Activated naive CD4-positive, alpha-beta T cell treated with anti-CD3 and anti-CD28 coated beads for 36 hours (primary cell): ENCODE measurements at regions of chr6 and their contacts with region 1.

Region 1: GRCh38 chr6:31795616-31796298 is at the start of gene VARS1:
- DNase-seq: peak; percentile 89
- H3K4me3 Mint-ChIP-seq: peak within 1 kb of the TSS; percentile 99
- H3K27ac Mint-ChIP-seq: peak within 1 kb of the TSS; percentile 96
- H3K4me1 Mint-ChIP-seq: peaks cover 43% of the 10 kb centered on the region
- H3K27me3 Mint-ChIP-seq: no peaks in the 10 kb centered on the region
- total RNA-seq, gene VARS1: 157 to 161 TPM

Region 2: GRCh38 chr6:31702819-31703522 is 92.8 kb before region 1 on chr6 and contains the start of gene ABHD16A:
- CTCF ChIA-PET with region 1: no interaction called
- intact Hi-C with region 1: loop called (anchors 1 kb)
- DNase-seq: peak; percentile 99
- H3K4me3 Mint-ChIP-seq: peak within 1 kb of the TSS; percentile 99
- H3K27ac Mint-ChIP-seq: peak within 1 kb of the TSS; percentile 97
- H3K4me1 Mint-ChIP-seq: peaks cover 22% of the 10 kb centered on the region
- H3K27me3 Mint-ChIP-seq: no peaks in the 10 kb centered on the region
- total RNA-seq, gene ABHD16A: 19.9 to 22.5 TPM

Region 3: DNA sequence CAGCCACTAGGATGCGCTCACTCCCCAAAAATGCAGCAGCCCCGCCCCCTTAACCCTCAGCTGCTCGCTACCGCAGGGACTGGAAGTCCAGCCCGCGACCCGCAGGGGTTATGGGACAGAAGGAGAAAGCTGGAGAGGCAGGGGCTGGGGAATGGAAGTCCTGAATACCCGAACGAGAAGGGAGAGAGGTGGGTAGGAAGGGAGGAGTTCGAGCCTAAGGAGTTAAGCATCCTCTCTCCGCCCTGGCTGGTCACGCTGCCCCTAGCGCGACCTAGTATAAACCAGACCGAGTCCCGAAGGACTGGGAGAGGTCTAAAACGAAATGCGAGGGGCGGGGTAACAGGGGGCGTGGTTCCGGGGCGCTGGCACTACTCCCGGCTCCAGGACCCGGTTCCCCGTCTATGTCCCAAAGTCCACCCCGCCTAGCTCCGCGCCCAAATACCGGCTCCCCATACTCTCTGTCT is 66.2 kb before region 1 on chr6:
- CTCF ChIA-PET with region 1: interaction called, 5 read pairs
- intact Hi-C with region 1: loop called (anchors 2 kb)
- DNase-seq: peak; percentile 81
- H3K4me3 Mint-ChIP-seq: peak overlapping the region; percentile 79
- H3K27ac Mint-ChIP-seq: peak overlapping the region; percentile 72
- H3K4me1 Mint-ChIP-seq: peaks cover 59% of the 10 kb centered on the region
- H3K27me3 Mint-ChIP-seq: no peaks in the 10 kb centered on the region

Region 4: DNA sequence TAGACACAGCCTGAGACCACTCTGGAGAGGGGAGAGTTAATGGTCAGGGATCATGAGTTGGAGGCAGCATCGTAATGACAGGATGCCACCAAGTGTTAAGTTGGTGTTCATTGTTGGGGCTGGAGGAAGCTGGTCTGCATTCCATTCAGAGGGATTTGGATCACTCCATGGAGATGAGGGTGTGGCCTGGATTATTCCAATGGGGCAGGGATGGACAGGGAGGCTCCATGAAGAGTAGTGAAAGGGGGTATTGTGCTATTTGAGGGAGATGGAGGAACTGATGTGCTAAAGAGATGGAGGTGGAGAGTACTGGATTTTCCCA is 32.2 kb before region 1 on chr6:
- CTCF ChIA-PET with region 1: no interaction called
- intact Hi-C with region 1: no loop called
- DNase-seq: no peak
- H3K4me3 Mint-ChIP-seq: no peak overlapping the region
- H3K27ac Mint-ChIP-seq: no peak overlapping the region
- H3K4me1 Mint-ChIP-seq: peaks cover 2% of the 10 kb centered on the region
- H3K27me3 Mint-ChIP-seq: no peaks in the 10 kb centered on the region

Region 5: GRCh38 chr6:31806465-31807272 is 10.9 kb after region 1 on chr6 and contains the start of gene LSM2:
- CTCF ChIA-PET with region 1: interaction called, 15 read pairs
- intact Hi-C with region 1: loop called (anchors 1 kb)
- DNase-seq: peak; percentile 98
- H3K4me3 Mint-ChIP-seq: peak within 1 kb of the TSS; percentile 94
- H3K27ac Mint-ChIP-seq: peak within 1 kb of the TSS; percentile 86
- H3K4me1 Mint-ChIP-seq: peaks cover 22% of the 10 kb centered on the region
- H3K27me3 Mint-ChIP-seq: no peaks in the 10 kb centered on the region
- total RNA-seq, gene LSM2: 172 to 174 TPM

Region 6: DNA sequence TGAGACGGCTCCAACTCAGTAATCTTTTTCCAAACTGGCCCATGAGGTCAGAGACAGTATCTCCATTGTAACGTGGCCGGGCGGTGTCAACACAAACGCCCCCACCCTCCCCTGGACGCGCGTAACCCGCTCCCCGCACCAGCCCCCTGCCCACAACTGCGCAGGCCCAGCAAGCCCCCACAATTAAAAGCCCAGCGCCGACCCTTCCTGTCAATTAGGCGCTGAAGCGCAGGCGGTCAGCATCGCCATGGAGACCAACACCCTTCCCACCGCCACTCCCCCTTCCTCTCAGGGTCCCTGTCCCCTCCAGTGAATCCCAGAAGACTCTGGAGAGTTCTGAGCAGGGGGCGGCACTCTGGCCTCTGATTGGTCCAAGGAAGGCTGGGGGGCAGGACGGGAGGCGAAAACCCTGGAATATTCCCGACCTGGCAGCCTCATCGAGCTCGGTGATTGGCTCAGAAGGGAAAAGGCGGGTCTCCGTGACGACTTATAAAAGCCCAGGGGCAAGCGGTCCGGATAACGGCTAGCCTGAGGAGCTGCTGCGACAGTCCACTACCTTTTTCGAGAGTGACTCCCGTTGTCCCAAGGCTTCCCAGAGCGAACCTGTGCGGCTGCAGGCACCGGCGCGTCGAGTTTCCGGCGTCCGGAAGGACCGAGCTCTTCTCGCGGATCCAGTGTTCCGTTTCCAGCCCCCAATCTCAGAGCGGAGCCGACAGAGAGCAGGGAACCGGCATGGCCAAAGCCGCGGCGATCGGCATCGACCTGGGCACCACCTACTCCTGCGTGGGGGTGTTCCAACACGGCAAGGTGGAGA is 19.5 kb after region 1 on chr6 and contains the starts of genes HSPA1A and HSPA1L:
- CTCF ChIA-PET with region 1: interaction called, 8 read pairs
- intact Hi-C with region 1: loop called (anchors 2 kb)
- DNase-seq: peak; percentile 60
- H3K4me3 Mint-ChIP-seq: peak within 1 kb of the TSS; percentile 84
- H3K27ac Mint-ChIP-seq: peak within 1 kb of the TSS; percentile 96
- H3K4me1 Mint-ChIP-seq: peaks cover 54% of the 10 kb centered on the region
- H3K27me3 Mint-ChIP-seq: no peaks in the 10 kb centered on the region
- total RNA-seq, gene HSPA1A: 19.8 to 23.1 TPM
- total RNA-seq, gene HSPA1L: 0.86 to 0.95 TPM

Region 7: DNA sequence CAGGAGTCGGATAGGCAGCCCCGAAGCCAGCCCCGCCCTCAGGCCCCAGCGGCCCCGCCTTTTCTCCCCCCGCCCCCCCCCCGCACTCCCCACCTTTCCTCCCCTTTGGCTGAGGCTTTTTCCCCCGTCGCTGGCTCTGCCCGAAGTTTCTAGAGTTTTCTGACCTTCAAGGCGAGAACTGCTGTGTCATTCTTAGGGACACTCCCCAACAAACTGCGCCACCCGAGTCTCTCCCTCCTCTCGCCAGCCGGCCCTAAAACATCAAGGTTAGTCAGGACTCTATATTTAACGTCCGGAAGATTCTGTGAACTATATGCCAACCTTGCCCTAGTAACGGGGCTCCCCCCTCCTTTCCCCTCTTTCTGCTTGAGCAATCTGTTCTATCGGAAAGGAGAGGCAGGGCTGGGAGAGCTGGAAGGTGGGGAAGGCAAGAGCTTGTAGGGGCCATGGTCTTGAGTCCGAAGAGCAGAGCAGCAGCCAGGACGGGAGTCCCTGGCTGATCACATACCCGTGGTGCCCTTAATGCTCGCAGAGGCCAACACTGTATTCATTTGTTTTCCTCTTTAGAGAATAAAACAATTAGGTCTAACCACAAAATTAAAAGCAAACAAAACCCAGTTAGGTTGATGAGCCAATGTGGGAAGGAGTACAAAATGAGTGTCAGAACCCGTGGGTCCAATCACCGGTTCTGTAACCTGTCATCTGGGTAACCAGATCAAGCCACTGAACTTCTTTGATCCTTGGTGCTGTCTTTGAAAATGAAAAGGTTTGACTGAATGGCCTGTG is 26.5 kb after region 1 on chr6:
- CTCF ChIA-PET with region 1: interaction called, 8 read pairs
- intact Hi-C with region 1: loop called (anchors 2 kb)
- DNase-seq: peak; percentile 83
- H3K4me3 Mint-ChIP-seq: peak overlapping the region; percentile 78
- H3K27ac Mint-ChIP-seq: peak overlapping the region; percentile 92
- H3K4me1 Mint-ChIP-seq: peaks cover 66% of the 10 kb centered on the region
- H3K27me3 Mint-ChIP-seq: no peaks in the 10 kb centered on the region